ENCODE measurements at regions of chr12 and their contacts with region 1.

Region 1: GRCh38 chr12:29041621-29042020 is 107.5 kb upstream of the FAR2 start:
- DNase-seq: peak; percentile 60
- H3K4me3 ChIP-seq: no peak overlapping the region
- H3K27ac ChIP-seq: no peak overlapping the region
- H3K4me1 ChIP-seq: peaks cover 7% of the 10 kb centered on the region
- H3K27me3 ChIP-seq: no peaks in the 10 kb centered on the region
- CTCF ChIP-seq: no peak

Region 2: DNA sequence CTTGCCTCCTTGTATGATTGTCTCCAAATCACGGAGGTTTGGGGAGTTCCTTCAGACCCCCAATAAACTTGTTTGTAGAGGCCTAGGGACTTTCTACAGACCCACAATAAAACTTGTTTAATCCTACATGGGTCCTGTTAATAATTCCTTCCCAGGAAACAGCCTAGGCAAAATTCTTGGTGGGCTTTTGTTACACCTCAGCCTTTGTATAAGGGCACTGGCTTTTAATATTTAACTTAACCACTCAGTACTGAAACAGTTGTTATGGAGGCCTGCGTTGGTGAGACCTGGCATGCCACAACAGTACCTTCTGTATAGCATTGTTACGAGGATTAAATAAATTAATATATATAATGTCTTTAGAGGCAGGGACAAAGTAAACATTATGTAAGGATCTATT is 74.8 kb after region 1 on chr12:
- CTCF ChIA-PET with region 1: no interaction called
- dilution Hi-C with region 1: loop called (anchors 5 kb)
- in situ Hi-C with region 1: no loop called
- intact Hi-C with region 1: no loop called
- DNase-seq: no peak
- H3K4me3 ChIP-seq: no peak overlapping the region
- H3K27ac ChIP-seq: no peak overlapping the region
- H3K4me1 ChIP-seq: peaks cover 18% of the 10 kb centered on the region
- H3K27me3 ChIP-seq: no peaks in the 10 kb centered on the region
- CTCF ChIP-seq: no peak